ENCODE measurements at regions of chr9 and their contacts with region 1.

Region 1: DNA sequence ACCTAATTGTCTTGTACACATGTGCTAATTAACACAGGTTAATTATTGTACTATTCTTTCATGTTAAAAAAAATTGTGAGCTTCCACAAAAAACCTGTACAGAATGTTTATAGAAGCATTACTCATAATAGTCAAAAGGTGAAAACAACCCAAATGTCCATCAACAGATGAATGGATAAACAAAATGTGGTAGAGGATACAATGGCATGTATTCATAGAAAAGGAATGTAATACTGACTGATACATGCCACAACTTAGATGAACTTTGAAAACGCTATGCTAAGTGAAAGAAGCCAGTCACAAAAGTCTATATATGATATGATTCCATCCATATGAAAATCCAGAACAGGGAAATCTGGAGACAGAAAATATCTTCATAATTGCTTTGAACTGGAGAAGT is 25.6 kb downstream of the RRAGA start:
- DNase-seq: no peak
- H3K4me3 Mint-ChIP-seq: no peak overlapping the region
- H3K27ac Mint-ChIP-seq: peak overlapping the region; percentile 78
- H3K4me1 Mint-ChIP-seq: peaks cover 12% of the 10 kb centered on the region
- H3K27me3 Mint-ChIP-seq: no peaks in the 10 kb centered on the region
- CTCF ChIP-seq: no peak

Region 2: GRCh38 chr9:18747595-18747994 is 327.2 kb before region 1 on chr9:
- CTCF ChIA-PET with region 1: no interaction called
- intact Hi-C with region 1: no loop called
- DNase-seq: no peak
- H3K4me3 Mint-ChIP-seq: no peak overlapping the region
- H3K27ac Mint-ChIP-seq: no peak overlapping the region
- H3K4me1 Mint-ChIP-seq: no peaks in the 10 kb centered on the region
- H3K27me3 Mint-ChIP-seq: peaks cover 26% of the 10 kb centered on the region
- CTCF ChIP-seq: no peak

Region 3: GRCh38 chr9:19379697-19380046 is 304.8 kb after region 1 on chr9:
- CTCF ChIA-PET with region 1: no interaction called
- intact Hi-C with region 1: loop called (anchors 10 kb)
- DNase-seq: no peak
- H3K4me3 Mint-ChIP-seq: peak overlapping the region; percentile 95
- H3K27ac Mint-ChIP-seq: peak overlapping the region; percentile 99
- H3K4me1 Mint-ChIP-seq: peaks cover 25% of the 10 kb centered on the region
- H3K27me3 Mint-ChIP-seq: no peaks in the 10 kb centered on the region
- CTCF ChIP-seq: no peak

Measured in Calu3 (cell line).